Posterior vena cava (tissue), 2 donors: ENCODE measurements at regions of chr1 and their contacts with region 1.

Region 1: DNA sequence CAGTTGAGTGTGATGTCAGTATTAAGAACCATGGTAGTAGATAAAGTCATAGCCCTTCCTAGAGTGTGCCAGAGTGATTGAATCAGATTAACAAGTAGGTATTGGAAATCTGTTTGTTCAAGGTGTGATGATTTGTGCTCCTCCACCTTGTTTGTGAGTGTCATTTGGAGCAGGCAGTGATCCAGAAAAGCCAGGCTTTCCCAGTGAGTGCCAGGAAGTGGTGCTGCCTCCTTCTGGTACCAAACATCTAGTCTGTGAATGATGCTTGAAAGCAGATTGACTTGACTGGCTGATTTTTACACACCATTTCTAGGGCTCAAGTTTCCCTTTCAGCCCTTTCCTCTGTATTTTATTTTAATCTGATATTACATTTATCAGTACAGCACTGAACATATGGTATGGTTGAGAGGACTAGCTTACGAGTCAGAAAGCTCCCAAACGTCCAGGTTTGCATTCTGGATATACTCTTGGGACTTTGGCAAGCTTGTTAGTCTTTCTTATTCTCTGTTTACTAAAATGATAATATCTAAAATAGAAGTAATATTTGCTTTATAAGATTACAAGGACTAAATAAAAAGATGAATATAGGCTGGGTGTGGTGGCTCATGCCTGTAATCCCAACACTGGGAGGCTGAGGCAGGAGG is 100.7 kb downstream of the PATJ start:
- DNase-seq: no peak

Region 2: GRCh38 chr1:61674221-61674620 is 168.8 kb before region 1 on chr1:
- intact Hi-C with region 1: no loop called
- DNase-seq: no peak

Region 3: DNA sequence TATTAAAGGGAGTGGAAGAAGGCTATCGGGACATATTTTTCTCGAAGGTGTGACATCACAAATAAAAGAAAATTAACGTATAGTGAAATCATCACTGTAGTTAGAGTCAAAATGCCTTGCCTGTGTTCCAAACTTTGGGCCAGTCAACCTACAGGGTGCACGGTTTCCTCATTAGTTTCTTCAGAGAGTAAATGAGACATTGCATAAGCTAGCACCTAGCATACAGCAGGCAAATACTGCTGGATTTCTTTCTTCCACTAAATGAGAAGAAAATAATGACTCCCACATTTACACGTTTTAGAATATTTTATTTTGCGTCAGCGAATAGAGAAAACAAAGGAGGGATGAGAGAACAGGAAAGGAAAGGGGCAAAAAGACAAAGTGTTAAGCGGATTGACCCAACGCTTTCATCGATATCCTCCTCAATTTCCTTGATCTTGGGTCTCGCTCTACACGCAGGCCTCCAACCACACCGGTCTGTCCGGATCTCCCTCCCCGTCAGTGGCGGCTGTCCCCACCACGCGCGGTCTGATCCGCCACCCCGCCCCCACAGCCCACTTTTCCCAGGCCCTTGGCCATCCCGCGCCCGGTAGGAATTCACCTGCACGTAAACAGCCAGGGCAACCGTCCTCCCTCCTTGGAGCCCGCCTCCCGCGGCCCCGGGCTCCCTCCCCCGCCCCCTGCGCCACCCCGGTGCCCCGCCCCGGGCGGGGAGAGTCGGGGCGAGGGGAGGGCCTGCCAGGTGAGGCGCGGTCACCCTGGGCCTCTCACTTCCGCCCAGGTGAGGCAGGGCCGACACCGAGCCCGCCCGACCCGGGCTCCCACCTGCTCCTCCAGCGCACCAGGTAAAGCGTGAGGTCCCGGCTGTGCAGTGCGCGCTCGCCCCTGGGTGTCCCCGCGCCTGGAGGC is 101.0 kb before region 1 on chr1 and contains the start of gene PATJ:
- intact Hi-C with region 1: loop called in 1 of 2 experiments (anchors 5 kb)
- DNase-seq: peak; percentile 87
- total RNA-seq, gene PATJ: 15.2 to 23.5 TPM